HEK293 (cell line): ENCODE measurements at regions of chr17 and their contacts with region 1.

Region 1: GRCh38 chr17:33927732-33928133 is 327.4 kb upstream of the CCL2 start:
- H3K4me3 ChIP-seq: no peak overlapping the region
- H3K27ac ChIP-seq: no peak overlapping the region
- H3K4me1 ChIP-seq: 0 out of 2 replicates have a peak, but pooled peaks cover 2% of the 10 kb centered on the region
- CTCF ChIP-seq: no peak

Region 2: DNA sequence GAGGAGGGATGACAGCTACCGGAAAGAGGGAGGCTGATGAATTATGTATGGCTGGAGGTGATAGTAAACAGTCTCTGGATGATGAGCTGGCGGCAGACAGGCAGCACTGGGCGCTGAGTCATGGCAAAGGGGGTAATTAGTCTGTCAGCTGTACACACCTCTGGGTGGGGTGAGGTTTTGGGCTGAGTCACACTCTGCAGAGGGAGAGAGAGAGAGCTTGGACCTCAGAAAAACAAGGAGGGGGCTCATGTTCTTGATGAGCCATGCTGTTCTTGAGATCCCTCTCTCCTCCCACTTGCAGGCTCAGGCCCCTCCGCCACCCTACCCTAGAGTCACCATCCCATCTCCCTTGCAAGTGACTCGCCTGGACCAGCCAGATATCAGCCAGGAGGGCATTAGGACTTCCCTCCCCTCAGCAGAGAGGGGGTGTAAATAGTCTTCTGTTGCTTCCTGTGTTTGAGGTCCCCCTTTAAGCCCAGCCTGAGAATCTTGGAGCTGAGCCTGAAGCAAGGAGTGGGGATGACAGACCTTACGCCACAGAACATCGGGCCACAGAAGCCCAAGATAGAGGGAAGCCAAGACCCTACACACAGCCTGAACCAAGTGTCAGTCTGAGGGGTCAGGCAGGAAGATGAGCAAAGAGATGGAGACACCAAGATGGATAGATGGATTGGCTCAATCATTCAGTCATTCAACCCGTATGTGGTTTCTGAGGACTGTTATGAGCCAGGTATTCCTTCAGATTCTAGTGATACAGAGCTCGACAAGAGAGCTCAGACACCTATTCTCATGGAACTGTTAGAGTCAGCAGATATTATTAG is 55.8 kb before region 1 on chr17:
- CTCF ChIA-PET with region 1: no interaction called
- POLR2A ChIA-PET with region 1: no interaction called
- H3K4me3 ChIP-seq: no peak overlapping the region
- H3K27ac ChIP-seq: no peak overlapping the region
- H3K4me1 ChIP-seq: peaks cover 5% of the 10 kb centered on the region; the same call in 1 of the 2 replicates
- CTCF ChIP-seq: no peak

Region 3: DNA sequence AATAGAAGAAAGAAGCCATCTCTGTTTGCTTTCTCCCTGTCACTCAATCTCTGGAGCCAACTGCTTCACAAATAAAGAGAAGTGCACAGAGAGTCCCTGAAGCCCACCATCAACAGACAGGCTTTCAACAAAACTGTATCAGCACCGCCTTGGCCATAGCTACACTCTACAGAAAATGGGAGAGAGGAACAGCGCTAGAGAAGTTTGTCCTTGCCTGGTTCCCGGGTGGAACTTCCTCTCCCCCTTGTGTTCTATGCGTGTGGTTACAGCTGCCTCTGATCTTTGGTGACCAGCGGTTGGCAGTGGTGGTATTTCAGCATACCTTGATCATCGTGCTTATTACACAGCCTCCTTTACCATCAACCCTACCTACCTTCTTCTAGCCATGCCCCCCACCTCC is 235.9 kb after region 1 on chr17:
- CTCF ChIA-PET with region 1: interaction called, 10 read pairs
- POLR2A ChIA-PET with region 1: no interaction called
- H3K4me3 ChIP-seq: no peak overlapping the region
- H3K27ac ChIP-seq: no peak overlapping the region
- H3K4me1 ChIP-seq: peaks cover 10% of the 10 kb centered on the region; the same call in 1 of the 2 replicates
- CTCF ChIP-seq: peak; percentile 77; the same call in 1 of the 2 replicates

Region 4: DNA sequence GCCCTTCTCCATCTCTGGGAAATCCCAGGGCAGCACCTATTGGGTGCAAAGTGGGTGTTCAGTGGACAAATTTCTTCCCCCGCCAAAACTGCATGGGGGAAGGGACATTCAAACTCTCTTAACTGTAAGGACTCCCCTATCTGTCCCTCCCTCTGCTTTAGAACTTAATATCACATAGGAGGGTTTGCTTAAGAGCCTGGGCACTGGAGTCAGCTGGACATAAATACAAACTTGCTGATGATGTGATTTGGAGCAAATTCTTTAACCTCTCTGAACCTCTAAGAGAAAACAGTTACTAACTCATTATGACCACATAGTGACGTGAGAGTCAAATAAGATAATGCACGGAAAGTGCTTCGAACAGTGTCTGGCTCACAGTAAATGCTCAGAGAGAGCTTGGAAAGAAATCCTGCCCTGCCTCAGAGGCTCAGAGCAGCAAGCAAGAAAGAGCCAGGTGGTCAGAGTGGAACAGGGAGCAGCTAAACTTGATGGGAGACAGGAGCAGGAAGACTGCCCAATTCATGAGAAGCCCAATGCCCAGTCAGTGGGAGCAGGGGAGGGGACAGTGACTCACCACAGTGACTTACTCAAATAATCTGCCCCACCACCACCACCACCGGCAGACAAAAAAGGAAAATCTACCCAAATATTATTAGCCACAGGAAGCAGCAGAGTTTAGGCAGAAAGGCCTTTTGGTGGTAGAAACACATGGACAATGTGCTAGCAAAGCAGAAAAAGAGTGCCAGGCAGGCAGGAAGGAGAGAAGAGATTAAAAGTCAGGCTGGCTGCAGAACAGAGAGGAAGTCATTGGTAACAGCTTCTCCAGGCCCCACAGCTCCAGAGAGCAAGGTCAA is 459.2 kb after region 1 on chr17:
- CTCF ChIA-PET with region 1: no interaction called
- POLR2A ChIA-PET with region 1: no interaction called
- H3K4me3 ChIP-seq: no peak overlapping the region
- H3K27ac ChIP-seq: no peak overlapping the region
- H3K4me1 ChIP-seq: no peaks in the 10 kb centered on the region
- CTCF ChIP-seq: no peak